ENCODE measurements at regions of chr5 and their contacts with region 1.

Region 1: DNA sequence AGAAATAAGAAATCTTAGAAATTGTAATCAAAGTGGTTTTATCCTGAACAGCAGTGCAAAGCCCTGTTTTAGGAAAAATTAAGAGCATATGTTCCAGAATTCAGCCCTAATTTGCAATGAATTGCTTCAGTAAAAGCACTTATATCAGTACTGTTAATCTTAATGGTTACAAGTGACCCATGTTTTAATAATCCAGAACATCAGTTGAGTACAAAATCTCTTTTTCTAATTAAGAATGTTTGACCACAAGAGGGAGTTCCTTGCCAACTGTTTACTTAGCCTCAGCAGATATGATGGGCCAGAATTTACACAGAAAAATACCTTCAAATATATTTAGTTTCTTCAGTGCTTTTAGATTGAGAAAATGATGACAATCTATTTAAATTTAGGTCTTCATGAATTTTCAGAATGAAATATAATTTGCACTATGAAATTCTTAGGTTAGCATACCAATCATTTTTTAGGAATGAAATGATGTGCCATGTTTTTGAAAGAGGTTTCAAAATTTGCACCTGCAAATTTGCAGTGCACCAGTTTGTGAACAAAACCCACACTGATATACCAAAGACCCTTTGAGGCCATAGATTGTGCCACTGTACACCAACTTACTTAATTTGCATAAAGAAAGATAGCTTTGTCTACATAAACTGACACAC is 926.3 kb upstream of the ARRDC3 start:
- DNase-seq: peak; percentile 61
- ATAC-seq: peak; percentile 64
- H3K4me3 ChIP-seq: no peak overlapping the region
- H3K27ac ChIP-seq: no peak overlapping the region
- H3K4me1 ChIP-seq: no peaks in the 10 kb centered on the region
- H3K27me3 ChIP-seq: no peaks in the 10 kb centered on the region
- CTCF ChIP-seq: peak; percentile 70

Region 2: DNA sequence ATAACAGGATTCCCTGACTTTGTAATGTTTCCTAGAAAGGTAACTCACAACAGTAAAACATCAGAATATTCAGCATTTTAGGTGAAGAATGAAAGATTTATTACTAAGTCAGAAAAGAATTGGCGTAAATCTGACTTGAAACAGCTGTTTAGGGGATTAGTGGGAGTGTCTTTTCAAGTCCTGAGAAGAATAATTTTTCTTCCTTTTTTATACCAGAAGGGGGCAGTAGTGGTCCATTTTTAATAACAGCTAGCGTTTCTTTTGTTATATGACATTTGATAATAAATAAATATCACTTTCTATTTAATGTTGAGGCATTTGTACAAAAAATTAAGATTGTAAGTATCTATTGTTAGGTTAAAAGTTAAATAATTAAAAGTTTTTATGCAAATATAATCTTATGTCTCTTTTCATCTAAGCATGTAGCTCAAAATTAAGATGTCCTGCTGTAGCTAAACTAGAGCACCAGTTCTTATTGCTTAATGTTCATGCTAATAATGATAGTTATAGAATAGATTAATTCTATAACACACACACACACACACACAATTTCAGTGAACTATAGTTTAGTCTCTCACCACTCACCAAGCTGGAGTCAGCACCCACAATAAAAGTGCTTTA is 667.6 kb before region 1 on chr5:
- CTCF ChIA-PET with region 1: no interaction called
- POLR2A ChIA-PET with region 1: no interaction called
- intact Hi-C with region 1: loop called (anchors 5 kb)
- DNase-seq: peak; percentile 87
- ATAC-seq: peak; percentile 60
- H3K4me3 ChIP-seq: no peak overlapping the region
- H3K27ac ChIP-seq: no peak overlapping the region
- H3K4me1 ChIP-seq: no peaks in the 10 kb centered on the region
- H3K27me3 ChIP-seq: peaks cover 11% of the 10 kb centered on the region; the same call in 1 of the 2 replicates
- CTCF ChIP-seq: peak; percentile 79

Region 3: DNA sequence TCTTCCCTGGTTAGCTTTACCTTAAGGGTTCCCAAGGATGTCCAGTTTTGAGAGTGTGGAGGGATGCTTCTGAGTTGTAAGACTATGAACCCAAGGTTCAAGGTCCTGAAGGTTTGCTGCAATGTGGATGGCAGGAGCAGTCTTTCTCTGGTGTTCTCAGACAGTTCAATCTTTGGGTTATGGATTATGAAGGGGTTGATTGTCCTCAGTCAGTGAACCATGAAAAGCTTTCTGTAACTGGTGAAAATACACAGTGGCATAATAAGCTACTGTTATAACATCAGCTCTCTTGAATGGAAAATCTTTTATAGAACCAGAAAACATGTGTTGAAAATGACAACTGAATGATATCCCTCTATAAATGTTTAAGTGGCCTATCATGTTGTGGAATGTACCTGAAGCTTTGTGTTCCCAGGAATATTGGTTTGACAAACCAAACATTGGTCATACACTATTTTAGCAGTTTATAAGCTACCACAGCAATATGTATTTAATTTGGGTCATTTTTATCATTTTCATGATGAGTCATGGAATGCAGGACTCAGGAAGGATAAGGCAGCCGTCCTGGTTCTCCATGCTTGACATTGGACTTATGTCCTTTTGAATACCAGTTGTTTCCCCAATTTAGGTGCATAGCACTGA is 115.4 kb after region 1 on chr5:
- CTCF ChIA-PET with region 1: no interaction called
- POLR2A ChIA-PET with region 1: no interaction called
- intact Hi-C with region 1: loop called (anchors 5 kb)
- DNase-seq: peak; percentile 60
- ATAC-seq: peak; percentile 92
- H3K4me3 ChIP-seq: no peak overlapping the region
- H3K27ac ChIP-seq: peak overlapping the region; percentile 95
- H3K4me1 ChIP-seq: no peaks in the 10 kb centered on the region; the same call in 1 of the 2 replicates
- H3K27me3 ChIP-seq: no peaks in the 10 kb centered on the region
- CTCF ChIP-seq: no peak

Region 4: GRCh38 chr5:92641031-92641962 is 331.8 kb after region 1 on chr5:
- CTCF ChIA-PET with region 1: no interaction called
- POLR2A ChIA-PET with region 1: no interaction called
- intact Hi-C with region 1: loop called (anchors 5 kb)
- DNase-seq: peak; percentile 77
- ATAC-seq: peak; percentile 96
- H3K4me3 ChIP-seq: peak overlapping the region; percentile 58
- H3K27ac ChIP-seq: peak overlapping the region; percentile 72
- H3K4me1 ChIP-seq: 0 out of 2 replicates have a peak, but pooled peaks cover 5% of the 10 kb centered on the region
- H3K27me3 ChIP-seq: no peaks in the 10 kb centered on the region
- CTCF ChIP-seq: no peak

Region 5: DNA sequence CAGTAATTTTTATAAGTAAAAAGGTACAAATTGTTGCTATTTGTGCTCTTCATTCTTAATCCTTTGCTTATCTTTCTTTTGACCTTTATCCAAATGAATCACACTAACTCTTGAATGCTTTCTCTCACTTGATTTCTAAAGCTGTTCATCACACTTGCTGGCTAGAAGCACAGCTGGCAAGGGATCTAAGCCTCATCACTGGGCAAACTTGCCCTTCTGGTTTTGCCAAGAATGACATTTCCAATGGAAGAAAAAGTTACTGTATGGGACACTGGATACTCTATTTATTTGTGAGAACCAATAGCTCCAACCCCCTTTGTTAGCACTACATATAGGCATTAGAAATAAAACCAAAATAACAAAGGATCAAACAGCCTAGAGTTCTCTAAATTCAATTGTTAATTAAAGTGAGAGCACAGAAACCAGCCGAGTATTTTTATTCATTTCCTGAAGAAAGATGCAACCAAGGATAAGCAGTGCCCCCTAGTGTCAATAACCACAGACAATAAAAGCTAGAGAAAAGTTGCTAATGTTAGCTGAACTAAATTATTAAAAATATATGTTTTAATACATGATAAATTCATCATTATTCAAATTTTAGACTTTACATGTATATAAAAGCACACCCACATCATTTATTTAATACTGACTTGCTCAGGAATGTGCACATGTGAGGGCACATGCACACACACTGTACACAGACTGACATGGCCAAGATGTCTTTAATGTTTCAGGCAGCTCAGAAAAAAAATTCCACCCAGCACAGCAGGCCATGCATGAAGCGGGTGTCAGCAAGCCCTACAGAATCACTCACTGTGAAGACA is 1491.7 kb after region 1 on chr5:
- CTCF ChIA-PET with region 1: no interaction called
- POLR2A ChIA-PET with region 1: no interaction called
- intact Hi-C with region 1: loop called (anchors 10 kb)
- DNase-seq: peak; percentile 90
- ATAC-seq: peak; percentile 92
- H3K4me3 ChIP-seq: peak overlapping the region; percentile 36; the same call in 1 of the 2 replicates
- H3K27ac ChIP-seq: no peak overlapping the region
- H3K4me1 ChIP-seq: peaks cover 16% of the 10 kb centered on the region
- H3K27me3 ChIP-seq: no peaks in the 10 kb centered on the region
- CTCF ChIP-seq: peak; percentile 85